Heart right ventricle (tissue), 16 donors: ENCODE measurements at regions of chr20 and their contacts with region 1.

Region 1: DNA sequence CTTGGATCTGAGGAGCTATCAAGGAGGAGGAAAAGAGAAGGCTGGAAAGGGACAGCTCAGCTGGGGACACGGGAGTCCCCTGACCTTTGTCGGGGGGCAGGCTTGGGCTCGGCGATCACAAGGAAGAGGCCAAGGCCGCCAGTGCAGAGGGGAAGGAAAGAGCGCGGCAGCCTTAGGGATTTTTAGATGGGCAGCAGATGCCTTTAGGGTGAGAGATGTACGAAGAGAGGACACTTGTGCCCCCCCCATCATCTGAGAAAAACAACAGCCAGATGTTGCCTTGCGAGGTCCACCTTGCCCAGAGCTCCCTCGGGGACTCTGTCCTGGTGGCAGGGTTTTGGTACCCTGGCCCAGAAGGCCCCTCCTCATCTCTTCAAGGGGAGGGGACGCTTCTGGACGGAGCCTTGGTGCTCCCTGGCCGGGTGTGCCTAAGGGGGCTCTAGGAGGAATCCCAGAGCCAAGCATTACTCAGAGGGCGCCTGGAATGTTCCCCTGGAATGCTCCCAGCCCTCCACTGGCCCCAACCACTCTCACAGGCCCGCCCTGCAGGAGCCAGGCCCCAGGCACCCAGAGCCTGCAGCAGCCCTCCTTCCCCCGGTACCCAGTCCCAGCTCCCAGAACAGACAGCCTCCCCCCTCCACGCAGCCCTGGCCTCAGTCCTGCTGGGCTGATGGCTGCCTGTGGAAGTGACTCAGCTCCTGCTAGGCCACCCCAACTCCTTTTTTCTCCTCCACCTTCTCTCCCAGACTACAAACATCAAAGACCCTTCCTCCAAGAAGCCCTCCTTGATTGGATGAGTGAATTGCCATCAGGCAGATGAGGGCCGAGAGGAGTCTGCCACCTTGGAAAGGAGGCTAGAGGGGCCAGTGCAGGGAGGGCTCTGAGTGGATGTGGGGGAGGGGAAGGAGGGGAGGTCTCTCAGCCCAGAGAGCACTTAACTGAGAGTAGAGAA is 1.8 kb downstream of the ADAM33 start:
- DNase-seq: peak in 1 of 2 donors; percentile 58
- ATAC-seq: peak in 7 of 8 donors; percentile 23 to 66 (median 30)
- H3K4me3 ChIP-seq: peak overlapping the region in 8 of 10 donors; percentile 46 to 63 (median 54)
- H3K27ac ChIP-seq: peak overlapping the region in 9 of 10 donors; percentile 40 to 76 (median 60)
- H3K4me1 ChIP-seq: peaks cover 9 to 54% (median 29%) of the 10 kb centered on the region in 9 donors
- H3K27me3 ChIP-seq: peaks cover 0 to 61% (median 34%) of the 10 kb centered on the region in 7 donors
- CTCF ChIP-seq: no peak

Region 2: DNA sequence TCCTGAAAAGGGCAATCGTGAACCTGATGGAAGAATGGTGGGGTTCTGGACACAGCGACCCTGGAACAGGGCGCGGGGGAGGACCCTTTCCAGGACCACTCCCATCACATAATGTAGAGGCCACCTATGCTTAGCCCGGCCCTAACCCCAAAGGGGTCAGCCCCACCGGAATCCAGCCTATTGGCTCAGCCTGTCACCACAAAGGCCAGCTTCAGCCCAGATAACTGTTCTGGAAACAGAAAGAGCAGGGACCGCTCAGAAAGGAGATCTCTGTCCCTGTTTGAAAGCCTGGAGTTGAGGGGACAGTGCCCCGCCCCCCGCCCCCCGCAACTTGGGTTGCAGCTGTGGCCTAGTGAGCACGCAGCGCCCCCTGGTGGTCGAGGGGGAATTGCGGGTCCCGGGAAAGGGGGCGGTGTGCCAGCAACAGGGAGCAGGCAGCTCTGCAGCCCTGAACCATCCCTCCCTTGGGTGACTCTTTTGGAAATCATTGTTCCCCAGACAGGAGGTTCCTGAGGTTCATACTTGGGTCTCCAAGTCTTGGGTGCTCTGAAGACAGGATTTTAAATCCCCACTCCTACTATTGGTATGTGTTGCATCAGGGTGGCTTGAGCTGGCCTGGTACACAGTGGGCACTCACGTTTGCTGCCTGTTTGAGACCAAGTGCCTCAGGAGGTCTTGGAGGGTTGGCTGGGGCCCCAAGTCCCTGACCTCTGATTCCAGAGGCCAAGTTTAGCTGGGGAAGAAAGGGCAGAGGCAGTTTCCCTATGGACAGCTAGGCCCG is 30.9 kb after region 1 on chr20:
- intact Hi-C with region 1: loop called (anchors 1 to 5 kb)
- DNase-seq: peak; percentile 76 to 84
- ATAC-seq: peak; percentile 32 to 76 (median 56)
- H3K4me3 ChIP-seq: peak overlapping the region in 6 of 10 donors; percentile 5 to 49 (median 22)
- H3K27ac ChIP-seq: peak overlapping the region in 6 of 10 donors; percentile 12 to 75 (median 44)
- H3K4me1 ChIP-seq: peaks cover 3 to 56% (median 14%) of the 10 kb centered on the region in 9 donors
- H3K27me3 ChIP-seq: no peaks in the 10 kb centered on the region
- CTCF ChIP-seq: peak; percentile 90 to 99 (median 97)

Region 3: DNA sequence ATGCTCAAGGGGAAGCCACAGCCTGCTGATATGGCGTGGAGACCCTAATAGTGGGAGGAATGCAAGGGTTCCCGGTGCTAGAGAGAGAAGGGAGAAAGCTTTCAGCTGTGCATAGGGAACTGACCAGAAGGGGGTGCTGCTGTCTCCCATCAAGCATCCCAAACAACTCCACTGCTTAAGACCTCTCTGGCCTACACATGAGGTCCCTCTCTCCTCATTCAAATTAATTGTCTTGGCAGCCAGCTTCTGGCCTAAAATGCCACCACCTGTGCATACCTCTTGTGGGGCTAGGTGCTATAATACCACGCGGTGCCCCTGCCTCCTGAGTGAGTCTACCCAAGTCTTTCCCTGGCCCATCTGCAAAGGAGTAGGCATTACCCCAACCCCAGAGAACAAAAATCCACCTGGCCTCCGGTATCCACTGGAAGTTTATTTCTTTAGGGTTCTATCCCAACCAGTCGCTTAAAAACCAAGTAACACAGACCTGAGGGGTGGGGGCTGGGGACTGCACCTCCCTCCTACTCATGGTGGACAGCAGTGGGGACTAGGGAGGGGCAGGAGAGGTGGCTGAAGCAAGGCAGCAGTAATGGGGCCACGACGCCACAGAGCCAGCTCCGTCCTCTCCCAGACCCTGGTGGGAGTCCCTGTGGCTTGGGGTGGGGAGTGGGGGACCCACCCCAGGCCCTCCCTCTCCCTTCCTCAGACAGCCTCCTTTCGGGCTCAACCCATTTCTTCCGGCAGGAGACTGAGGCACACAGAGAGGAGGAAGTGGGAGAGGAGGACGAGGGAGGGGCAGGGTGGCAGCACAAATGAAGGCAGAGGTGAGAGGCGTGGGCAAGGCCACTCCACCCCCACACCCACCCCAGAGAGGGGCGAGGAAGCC is 73.3 kb after region 1 on chr20:
- intact Hi-C with region 1: loop called in 1 of 10 experiments (anchors 10 kb)
- DNase-seq: peak in 1 of 2 donors; percentile 72
- ATAC-seq: peak; percentile 53 to 87 (median 69)
- H3K4me3 ChIP-seq: no peak overlapping the region
- H3K27ac ChIP-seq: peak overlapping the region in 4 of 10 donors; percentile 16 to 56 (median 39)
- H3K4me1 ChIP-seq: peaks cover 0 to 67% (median 23%) of the 10 kb centered on the region in 9 donors
- H3K27me3 ChIP-seq: peaks cover 0 to 21% (median 9%) of the 10 kb centered on the region in 7 donors
- CTCF ChIP-seq: peak; percentile 60 to 85 (median 79)

Region 4: DNA sequence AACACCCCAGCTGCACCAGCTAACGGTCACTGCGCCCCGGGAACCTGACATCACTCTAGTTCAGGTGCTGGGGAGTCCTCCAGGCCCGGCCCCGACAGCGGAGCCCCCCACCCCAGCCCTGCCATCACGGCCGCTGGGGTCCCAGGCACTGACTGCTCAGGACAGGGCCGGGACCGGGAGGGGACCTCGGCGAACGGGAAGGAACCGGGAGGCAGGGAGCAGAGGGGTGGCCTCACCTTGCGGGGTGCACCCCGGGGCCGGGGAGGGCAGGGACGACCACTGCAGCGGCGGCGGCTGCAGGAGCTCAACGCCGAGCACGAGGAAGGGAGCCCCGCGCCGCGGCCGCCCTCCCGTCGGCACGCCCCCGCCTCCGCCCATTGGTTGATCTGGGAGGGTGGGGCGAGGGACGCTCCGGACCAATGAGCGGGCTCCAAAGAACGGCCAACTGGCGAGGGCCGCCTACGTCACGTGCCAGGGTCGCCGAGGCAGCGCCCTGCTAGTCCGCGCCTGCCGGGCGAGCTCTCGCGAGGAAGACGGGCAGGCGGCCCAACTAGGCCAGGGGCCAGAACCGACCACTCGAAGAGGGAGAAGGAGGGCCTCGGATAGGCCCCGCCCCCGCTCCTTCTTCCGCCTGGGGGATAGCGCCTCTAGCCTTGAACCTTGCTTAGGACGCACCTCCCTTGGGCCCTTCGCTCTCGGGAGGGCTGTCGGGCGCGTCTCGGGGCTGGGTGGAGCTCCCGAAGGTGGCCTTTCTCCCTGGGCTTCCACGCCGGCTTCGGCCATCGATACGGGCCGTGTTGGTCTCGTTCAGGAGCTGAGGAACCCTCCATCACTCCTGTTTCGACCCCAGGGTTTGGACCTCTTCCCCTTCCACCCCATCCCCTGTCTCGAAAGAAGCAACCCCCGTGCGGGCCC is 87.7 kb after region 1 on chr20 and contains the start of gene ADISSP:
- intact Hi-C with region 1: loop called in 5 of 10 experiments (anchors 5 to 10 kb)
- DNase-seq: peak; percentile 99
- ATAC-seq: peak; percentile 95 to 98 (median 96)
- H3K4me3 ChIP-seq: peak within 1 kb of the TSS; percentile 53 to 83 (median 65)
- H3K27ac ChIP-seq: peak within 1 kb of the TSS; percentile 48 to 95 (median 85)
- H3K4me1 ChIP-seq: peaks cover 7 to 61% (median 38%) of the 10 kb centered on the region in 9 donors
- H3K27me3 ChIP-seq: no peaks in the 10 kb centered on the region
- CTCF ChIP-seq: peak in 6 of 9 donors; percentile 7 to 40 (median 19)
- total RNA-seq, gene ADISSP: 7.7 to 15.7 (median 9.7) TPM

Region 5: GRCh38 chr20:3781153-3781910 is 101.3 kb after region 1 on chr20 and contains the start of gene SPEF1:
- intact Hi-C with region 1: loop called in 1 of 10 experiments (anchors 10 kb)
- DNase-seq: peak; percentile 55 to 87
- ATAC-seq: peak; percentile 68 to 87 (median 80)
- H3K4me3 ChIP-seq: peak within 1 kb of the TSS in 9 of 10 donors; percentile 27 to 51 (median 44)
- H3K27ac ChIP-seq: peak within 1 kb of the TSS in 8 of 10 donors; percentile 2 to 57 (median 30)
- H3K4me1 ChIP-seq: peaks cover 33 to 61% (median 43%) of the 10 kb centered on the region in 9 donors
- H3K27me3 ChIP-seq: peaks cover 0 to 17% (median 0%) of the 10 kb centered on the region in 7 donors
- CTCF ChIP-seq: peak in 7 of 9 donors; percentile 27 to 54 (median 44)
- total RNA-seq, gene SPEF1: 0.16 to 0.47 (median 0.23) TPM in 6 of 10 donors, not detected in the others

Region 6: GRCh38 chr20:3854462-3854871 is 174.4 kb after region 1 on chr20:
- intact Hi-C with region 1: loop called in 3 of 10 experiments (anchors 10 kb)
- DNase-seq: no peak
- ATAC-seq: peak in 2 of 8 donors; percentile 33 to 49
- H3K4me3 ChIP-seq: no peak overlapping the region
- H3K27ac ChIP-seq: peak overlapping the region in 1 of 10 donors; percentile 26
- H3K4me1 ChIP-seq: peaks cover 0 to 17% (median 5%) of the 10 kb centered on the region in 9 donors
- H3K27me3 ChIP-seq: no peaks in the 10 kb centered on the region
- CTCF ChIP-seq: no peak

Region 7: DNA sequence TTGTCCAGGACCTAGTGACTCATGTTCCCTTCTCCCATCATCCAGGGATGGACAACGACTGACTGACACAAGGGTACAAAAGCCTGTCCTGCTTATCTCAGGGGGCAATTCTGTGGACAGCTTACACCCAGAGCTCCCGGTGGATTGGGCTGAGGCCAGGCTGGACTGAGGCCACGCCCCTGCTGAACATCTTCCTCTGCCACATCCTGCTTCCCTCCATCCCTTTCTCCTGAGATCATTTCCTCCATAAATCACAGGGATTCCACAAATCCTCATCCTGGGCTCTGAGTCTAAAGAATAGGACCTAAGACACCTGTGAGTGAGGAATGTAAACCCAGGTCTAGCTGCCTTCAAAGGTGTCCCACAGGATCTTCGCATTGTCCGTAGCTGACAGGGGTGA is 365.7 kb after region 1 on chr20:
- intact Hi-C with region 1: no loop called
- DNase-seq: no peak
- ATAC-seq: no peak
- H3K4me3 ChIP-seq: no peak overlapping the region
- H3K27ac ChIP-seq: no peak overlapping the region
- H3K4me1 ChIP-seq: peaks cover 0 to 12% (median 4%) of the 10 kb centered on the region in 9 donors
- H3K27me3 ChIP-seq: no peaks in the 10 kb centered on the region
- CTCF ChIP-seq: no peak

Region 8: DNA sequence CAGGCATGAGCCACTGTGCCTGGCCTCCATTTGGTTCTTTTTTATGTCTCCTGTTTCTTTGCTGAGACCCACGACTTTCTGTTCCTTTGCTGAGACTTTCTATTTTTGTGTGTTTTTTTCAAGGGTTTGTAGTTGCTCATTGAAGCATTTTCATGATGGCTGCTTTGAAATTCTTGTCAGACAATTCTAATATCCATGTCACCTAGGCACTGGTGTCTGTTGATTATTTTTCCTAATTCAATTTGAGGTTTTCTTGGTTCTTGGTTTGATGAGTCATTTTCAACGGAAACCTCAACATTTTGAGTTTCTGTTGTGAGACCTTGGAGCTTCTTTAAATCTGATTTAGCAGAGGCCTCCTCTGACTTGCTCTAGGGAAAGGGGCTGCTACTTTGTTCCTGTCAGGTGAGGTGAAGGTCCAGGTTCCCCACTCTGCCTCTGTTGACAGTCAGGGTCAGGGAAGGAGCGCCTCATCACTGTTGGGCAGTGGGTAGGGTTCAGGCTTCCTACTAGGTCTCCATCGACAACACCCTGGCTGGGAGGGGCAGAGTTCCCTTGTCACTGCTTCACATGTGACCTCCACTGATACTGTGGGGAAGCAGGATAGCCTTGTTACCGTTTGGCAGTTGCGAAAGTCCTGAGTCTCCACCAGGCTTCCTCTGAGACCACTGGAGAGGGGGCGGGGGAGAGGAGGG is 402.5 kb after region 1 on chr20:
- intact Hi-C with region 1: loop called in 3 of 10 experiments (anchors 10 kb)
- DNase-seq: peak; percentile 44 to 55
- ATAC-seq: peak; percentile 33 to 71 (median 46)
- H3K4me3 ChIP-seq: no peak overlapping the region
- H3K27ac ChIP-seq: peak overlapping the region in 5 of 10 donors; percentile 19 to 88 (median 53)
- H3K4me1 ChIP-seq: peaks cover 0 to 53% (median 8%) of the 10 kb centered on the region in 9 donors
- H3K27me3 ChIP-seq: peaks cover 0 to 6% (median 0%) of the 10 kb centered on the region in 7 donors
- CTCF ChIP-seq: no peak